ENCODE measurements at regions of chr7 and their contacts with region 1.

Region 1: DNA sequence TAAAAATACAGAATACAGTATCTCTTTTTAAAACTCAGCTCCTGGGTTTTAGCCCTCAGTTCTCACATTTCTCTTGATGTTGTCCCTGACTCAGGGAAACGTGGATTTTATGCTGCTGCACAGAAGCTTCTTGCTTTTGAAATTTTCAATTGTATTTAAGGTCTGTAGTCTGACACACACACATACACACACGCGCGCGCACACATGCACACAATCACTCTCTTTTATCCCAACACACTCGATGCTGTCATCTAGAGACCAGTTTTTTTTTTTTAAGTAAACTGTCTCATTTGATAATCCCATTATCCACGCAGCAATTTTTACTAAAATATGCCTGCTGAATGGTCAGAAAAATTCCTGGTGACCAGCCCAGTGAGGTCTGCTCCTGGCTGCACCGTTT is 108.6 kb downstream of the KMT2E start:
- DNase-seq: no peak
- H3K4me3 ChIP-seq: no peak overlapping the region
- H3K27ac ChIP-seq: no peak overlapping the region
- H3K4me1 ChIP-seq: no peaks in the 10 kb centered on the region
- H3K27me3 ChIP-seq: no peaks in the 10 kb centered on the region
- CTCF ChIP-seq: no peak
- POLR2A ChIP-seq: no peak

Region 2: GRCh38 chr7:105060437-105060836 is 62.2 kb before region 1 on chr7:
- intact Hi-C with region 1: loop called (anchors 5 kb)
- DNase-seq: no peak
- H3K4me3 ChIP-seq: no peak overlapping the region
- H3K27ac ChIP-seq: no peak overlapping the region
- H3K4me1 ChIP-seq: no peaks in the 10 kb centered on the region
- H3K27me3 ChIP-seq: no peaks in the 10 kb centered on the region
- CTCF ChIP-seq: no peak
- POLR2A ChIP-seq: no peak

Region 3: GRCh38 chr7:105164751-105165150 is 42.1 kb after region 1 on chr7:
- intact Hi-C with region 1: no loop called
- DNase-seq: no peak
- H3K4me3 ChIP-seq: no peak overlapping the region
- H3K27ac ChIP-seq: no peak overlapping the region
- H3K4me1 ChIP-seq: no peaks in the 10 kb centered on the region
- H3K27me3 ChIP-seq: no peaks in the 10 kb centered on the region
- CTCF ChIP-seq: no peak
- POLR2A ChIP-seq: no peak

Region 4: GRCh38 chr7:105816266-105816828 is 693.7 kb after region 1 on chr7:
- intact Hi-C with region 1: no loop called
- DNase-seq: peak in 1 of 2 donors; percentile 60
- H3K4me3 ChIP-seq: no peak overlapping the region
- H3K27ac ChIP-seq: no peak overlapping the region
- H3K4me1 ChIP-seq: peaks cover 0 to 5% of the 10 kb centered on the region in 2 donors
- H3K27me3 ChIP-seq: no peaks in the 10 kb centered on the region
- CTCF ChIP-seq: no peak
- POLR2A ChIP-seq: no peak